Gastrocnemius medialis (tissue), 4 donors: ENCODE measurements at regions of chr7 and their contacts with region 1.

Region 1: GRCh38 chr7:37208528-37208927 is 240.1 kb downstream of the ELMO1 start:
- DNase-seq: peak; percentile 67 to 74
- ATAC-seq: peak; percentile 94 to 95
- H3K4me3 ChIP-seq: no peak overlapping the region
- H3K27ac ChIP-seq: peak overlapping the region; percentile 50 to 62 (median 58)
- H3K4me1 ChIP-seq: peaks cover 12 to 18% of the 10 kb centered on the region in 2 donors
- H3K27me3 ChIP-seq: no peaks in the 10 kb centered on the region
- CTCF ChIP-seq: peak in 2 of 5 experiments; percentile 27 to 48
- POLR2A ChIP-seq: no peak

Region 2: GRCh38 chr7:37113661-37114355 is 94.7 kb before region 1 on chr7:
- in situ Hi-C with region 1: no loop called
- intact Hi-C with region 1: no loop called
- DNase-seq: no peak
- ATAC-seq: no peak
- H3K4me3 ChIP-seq: no peak overlapping the region
- H3K27ac ChIP-seq: no peak overlapping the region
- H3K4me1 ChIP-seq: no peaks in the 10 kb centered on the region
- H3K27me3 ChIP-seq: no peaks in the 10 kb centered on the region
- CTCF ChIP-seq: no peak
- POLR2A ChIP-seq: no peak

Region 3: DNA sequence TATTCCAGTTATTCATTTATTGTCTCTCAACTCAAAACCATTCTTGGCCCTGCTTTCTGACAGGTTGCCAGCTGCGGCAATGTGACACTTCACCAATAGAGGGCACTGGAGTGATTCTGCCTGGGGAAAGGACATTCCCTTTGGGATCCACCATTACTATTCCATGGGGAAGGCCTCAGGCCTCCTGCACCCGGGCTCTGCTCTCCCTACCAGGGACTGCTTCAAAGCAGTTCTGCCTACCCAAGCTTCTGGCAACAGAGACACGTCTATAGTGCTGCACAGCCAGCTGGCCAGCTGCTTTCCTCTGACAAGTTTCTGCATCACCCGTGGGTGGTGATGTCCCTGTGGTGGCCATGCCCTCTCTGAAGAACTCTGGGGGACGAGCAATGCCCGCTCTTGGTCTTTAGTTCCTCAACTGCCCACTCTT is 76.3 kb after region 1 on chr7:
- in situ Hi-C with region 1: no loop called
- intact Hi-C with region 1: loop called (anchors 10 kb)
- DNase-seq: peak; percentile 13 to 41
- ATAC-seq: peak in 1 of 2 donors; percentile 33
- H3K4me3 ChIP-seq: no peak overlapping the region
- H3K27ac ChIP-seq: peak overlapping the region in 1 of 4 donors; percentile 44
- H3K4me1 ChIP-seq: peaks cover 0 to 33% of the 10 kb centered on the region in 2 donors
- H3K27me3 ChIP-seq: no peaks in the 10 kb centered on the region
- CTCF ChIP-seq: peak in 3 of 5 experiments; percentile 46 to 56 (median 54)
- POLR2A ChIP-seq: no peak

Region 4: DNA sequence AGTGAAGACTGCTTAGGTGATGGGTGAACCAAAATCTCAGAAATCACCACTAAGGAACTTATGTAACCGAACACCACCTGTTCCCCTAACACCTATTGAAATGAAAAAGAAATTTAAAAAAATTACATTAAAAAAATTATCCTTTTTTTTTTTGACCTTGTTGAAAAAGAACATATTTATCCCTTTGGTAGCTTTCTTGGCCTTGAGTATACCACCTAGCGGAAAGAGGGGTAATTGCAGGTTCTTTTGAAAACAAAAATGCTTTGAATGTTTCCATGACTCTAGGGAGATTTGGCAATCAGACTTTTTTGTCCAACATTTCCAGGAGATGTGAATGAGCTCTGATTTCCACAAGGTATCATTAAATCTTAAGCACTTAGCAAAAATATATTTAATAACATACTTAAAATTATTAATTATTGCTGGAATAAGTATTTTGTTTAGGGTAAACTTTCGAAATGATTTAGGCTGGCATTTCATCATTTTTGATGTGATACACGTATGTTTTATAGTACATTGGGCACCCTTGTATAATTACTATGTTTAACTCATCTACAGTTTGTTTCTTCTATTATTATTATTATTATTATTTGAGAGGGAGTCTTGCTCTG is 287.2 kb after region 1 on chr7:
- in situ Hi-C with region 1: no loop called
- intact Hi-C with region 1: loop called (anchors 5 kb)
- DNase-seq: no peak
- ATAC-seq: no peak
- H3K4me3 ChIP-seq: no peak overlapping the region
- H3K27ac ChIP-seq: no peak overlapping the region
- H3K4me1 ChIP-seq: no peaks in the 10 kb centered on the region
- H3K27me3 ChIP-seq: no peaks in the 10 kb centered on the region
- CTCF ChIP-seq: peak in 4 of 5 experiments; percentile 20 to 68 (median 44)
- POLR2A ChIP-seq: no peak